Right ventricle myocardium superior (tissue), 1 donor: ENCODE measurements at regions of chr2 and their contacts with region 1.

Region 1: DNA sequence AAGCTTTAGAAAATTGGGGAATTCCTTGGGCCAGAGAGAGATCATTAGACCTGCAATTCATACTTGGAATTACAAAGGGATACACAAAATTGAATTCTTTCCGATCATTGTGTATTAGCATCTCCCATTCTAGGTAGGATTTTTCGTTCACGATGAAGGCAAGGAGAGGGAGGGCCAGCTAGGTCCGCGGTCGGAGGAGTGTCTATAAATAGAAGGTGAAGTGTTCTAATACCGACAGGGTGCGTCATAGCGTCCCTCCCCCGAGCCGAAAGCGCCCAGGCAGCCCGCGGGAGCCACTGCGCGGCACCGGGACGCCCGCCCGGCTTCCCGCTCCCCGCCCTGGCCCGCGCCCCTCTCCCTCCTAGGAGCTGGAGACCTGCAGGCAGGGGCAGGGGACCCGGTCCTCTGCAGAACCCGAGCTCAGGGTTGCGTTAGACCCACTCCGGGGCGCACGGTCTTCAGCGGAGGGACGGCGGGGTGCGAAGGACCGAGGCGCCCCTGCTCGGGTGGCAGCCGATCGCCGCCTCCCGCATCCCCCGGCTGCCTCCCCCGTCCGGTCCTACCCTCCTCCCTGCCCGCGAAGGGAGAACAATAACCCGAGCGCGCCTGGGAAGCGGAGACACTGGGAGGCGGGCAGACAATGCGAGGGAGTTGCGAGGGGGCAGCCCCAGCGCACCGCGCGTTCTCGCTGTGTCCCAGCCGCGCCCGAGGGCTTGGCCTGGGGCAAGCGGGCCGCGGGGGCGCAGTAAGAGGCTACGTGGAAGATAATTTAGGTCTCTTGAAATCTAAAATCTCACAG is 114.2 kb upstream of the SERTAD2 start:
- DNase-seq: peak; percentile 93
- ATAC-seq: peak; percentile 97

Region 2: DNA sequence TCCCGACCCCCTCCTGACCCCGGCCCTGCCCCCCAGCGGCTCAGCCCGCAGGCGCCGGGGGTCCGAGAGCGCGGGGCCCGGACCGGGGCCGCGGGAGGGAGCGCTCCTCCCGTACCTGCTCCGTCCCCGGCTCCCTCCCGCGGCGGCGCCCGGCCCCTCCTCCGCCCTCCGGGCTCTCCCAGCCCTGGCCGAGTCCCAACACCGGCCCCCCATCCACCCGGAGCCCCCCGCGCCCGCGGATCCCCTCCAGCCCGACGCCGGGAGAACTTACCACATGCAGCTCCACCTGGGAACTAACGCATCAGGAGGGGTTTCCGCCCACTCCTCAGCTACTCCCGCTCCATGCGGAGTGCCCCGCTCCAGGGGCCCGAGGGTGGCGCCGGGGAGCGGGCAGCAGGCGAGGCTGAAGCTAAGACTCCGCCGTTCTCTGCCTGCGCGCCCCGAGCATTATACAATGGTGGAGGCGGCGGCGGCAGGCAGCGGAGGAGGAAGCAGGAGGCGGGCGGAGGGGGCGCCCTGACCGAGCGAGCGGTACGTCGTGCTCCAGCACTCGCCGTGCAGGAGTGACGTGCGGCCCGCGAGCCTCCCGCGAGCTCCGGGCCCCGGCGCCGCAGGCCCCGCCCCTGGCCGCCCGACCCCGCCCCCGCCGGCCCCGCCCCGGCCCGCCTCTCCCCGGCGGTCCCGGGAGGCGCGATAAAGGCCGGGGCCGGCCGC is 114.4 kb before region 1 on chr2 and contains the start of gene SERTAD2:
- intact Hi-C with region 1: loop called (anchors 5 kb)
- DNase-seq: peak; percentile 95
- ATAC-seq: peak; percentile 89
- total RNA-seq, gene SERTAD2: 12.8 TPM

Region 3: GRCh38 chr2:64750817-64751285 is 17.0 kb before region 1 on chr2:
- intact Hi-C with region 1: loop called (anchors 1 kb)
- DNase-seq: peak; percentile 99
- ATAC-seq: peak; percentile 89

Region 4: DNA sequence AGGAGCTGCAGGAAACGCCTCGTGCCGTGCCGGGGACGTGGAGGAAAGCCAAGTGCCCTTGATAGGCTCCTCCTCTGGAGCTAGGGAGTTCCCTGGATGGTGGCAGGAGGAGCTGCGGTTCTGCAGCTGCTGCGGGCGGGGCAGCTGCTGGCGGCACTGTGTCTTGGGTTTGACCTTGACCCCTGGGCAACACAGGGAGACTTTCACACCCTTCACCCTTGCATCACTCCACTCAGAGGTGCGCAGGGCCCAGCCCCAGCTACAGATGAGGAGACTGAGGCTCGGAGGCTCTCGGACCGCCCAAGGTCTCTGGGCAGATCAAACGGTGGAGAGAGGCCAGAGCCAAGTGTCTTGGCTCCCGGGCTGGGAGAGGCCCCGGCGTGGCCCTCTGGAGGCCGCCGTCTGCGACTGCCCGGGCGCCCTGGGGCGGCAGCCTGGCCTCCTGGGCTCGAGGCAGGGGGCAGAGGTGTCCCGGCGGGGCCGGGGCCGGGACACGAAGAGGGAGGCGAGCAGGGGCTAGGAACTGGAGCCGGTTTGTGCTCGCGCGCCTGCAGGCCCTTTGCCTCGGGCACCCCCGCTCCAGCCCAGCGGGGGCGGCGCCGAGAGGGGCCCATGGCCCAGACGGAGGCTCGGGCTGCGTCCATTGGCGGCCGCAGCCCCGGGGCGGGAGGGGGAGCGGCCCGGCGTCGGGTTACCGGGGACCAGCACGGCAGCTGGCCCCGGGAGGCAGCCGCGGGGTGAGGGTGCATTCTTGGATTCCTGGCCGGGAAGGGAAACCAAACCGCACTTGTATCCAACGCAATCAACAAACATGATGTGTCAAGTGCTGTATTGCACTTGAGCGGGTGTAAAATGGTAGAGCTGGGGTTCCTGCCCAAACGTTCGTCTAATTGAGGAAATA is 91.7 kb after region 1 on chr2:
- intact Hi-C with region 1: loop called (anchors 5 kb)
- DNase-seq: peak; percentile 95
- ATAC-seq: peak; percentile 90